Aorta (tissue), 5 donors: ENCODE measurements at regions of chr17 and their contacts with region 1.

Region 1: DNA sequence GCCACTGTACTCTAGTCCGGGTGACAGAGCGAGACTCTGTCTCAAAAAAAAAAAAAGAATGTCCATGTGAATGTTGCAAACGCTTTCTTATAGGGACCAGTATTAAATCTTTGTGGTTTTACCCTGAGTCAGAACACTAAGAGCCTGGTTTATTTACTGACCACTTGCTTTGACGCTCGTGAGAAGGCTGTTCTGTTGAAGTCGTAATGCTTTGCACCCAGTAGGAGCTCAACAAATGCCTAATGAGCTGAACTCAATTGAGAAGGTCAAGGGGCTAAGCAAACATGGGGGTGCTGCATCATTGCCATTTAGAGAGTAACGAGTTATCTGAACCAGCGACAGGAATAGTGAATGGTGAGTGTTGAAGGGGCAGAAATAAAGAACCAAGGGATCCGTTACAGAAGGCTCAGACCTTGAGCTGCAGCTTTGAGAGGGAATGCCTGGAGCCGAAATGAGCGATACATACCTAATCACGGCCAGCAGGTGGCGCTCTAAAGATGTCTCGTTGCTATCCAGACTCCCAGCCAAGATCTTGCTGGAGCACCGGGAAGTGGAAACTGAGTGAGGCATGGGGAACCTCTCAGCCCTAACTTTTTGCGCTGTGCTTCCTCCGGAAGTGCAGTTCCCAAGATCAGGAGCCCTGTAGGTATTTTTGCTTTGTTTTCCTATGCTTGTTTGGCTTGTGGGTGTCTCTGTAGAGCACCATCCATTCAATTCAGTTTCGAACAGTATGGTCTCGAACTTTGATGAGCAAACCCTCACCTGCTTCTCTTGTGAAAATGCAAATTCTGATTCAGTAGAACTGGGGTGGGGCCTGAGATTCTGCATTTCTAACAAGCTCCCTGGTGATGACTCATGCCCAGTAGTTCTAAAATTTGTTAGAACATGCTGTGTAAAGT is 12.6 kb upstream of the RNF222 start:
- DNase-seq: peak; percentile 93 to 97
- ATAC-seq: peak; percentile 94
- H3K4me3 ChIP-seq: no peak overlapping the region
- H3K27ac ChIP-seq: no peak overlapping the region
- H3K4me1 ChIP-seq: no peaks in the 10 kb centered on the region
- H3K27me3 ChIP-seq: no peaks in the 10 kb centered on the region

Region 2: DNA sequence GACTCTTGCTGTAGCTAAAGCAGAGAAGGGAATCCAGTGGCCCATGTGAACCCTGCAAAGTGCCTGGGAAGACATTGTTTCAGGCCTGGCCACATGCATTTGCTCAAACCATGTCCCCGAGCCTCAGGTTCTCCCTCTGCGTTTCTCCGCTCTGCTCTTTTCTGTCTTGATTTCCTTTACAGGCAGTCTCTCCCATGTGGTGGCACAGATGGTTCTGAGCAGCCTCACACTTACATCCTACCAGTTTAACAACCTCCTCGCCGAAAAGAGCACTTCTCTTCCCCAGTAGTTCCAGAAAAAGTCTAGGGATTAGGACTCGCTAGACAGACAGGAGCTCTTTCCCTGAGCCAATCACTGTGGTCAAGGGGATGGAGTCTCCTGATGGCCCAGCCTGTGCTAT is 248.6 kb after region 1 on chr17:
- intact Hi-C with region 1: no loop called
- DNase-seq: no peak
- ATAC-seq: no peak
- H3K4me3 ChIP-seq: no peak overlapping the region
- H3K27ac ChIP-seq: no peak overlapping the region
- H3K4me1 ChIP-seq: peaks cover 1 to 7% of the 10 kb centered on the region in 2 donors
- H3K27me3 ChIP-seq: no peaks in the 10 kb centered on the region

Region 3: DNA sequence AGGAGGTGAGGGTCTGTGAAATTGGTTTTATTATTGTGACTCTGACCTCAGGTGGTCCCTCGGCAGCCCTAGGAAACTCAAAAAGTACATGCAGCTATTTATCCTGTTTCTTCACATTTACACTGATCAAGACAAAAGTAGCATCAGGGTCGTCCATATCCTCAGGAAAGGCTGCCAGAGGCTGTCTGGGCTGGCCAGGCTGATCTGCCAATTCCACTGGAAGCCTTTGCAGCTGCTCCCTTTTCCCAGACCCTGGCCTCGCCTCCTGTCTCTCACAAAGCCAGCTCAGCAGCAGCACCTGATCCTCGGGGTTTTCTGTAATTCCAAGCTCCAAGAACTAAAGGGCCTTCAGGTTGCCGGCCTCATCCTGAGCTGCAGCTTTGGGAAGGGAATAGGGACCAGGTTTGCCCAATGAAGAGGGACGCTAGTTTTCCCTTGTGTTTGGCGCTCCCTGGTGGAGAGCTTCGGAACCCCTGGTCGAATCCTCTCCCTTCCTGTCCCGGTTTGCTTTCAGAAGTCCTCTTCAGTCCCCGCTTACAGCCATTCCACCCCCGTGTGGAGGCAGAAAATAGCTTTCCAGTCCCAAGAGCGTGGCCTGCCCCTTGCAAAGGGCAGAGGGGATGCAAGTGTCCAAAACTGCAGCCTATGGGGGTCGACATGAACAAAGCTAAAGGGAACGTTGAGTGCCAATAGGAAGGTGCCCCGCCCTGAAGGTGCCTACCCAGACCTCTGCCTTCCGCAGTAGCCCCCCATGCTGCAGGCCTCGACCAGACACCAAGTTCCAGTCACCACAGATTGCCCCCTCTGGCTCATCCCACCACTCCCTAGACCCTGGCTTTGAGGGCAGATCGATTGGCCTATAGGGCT is 375.6 kb after region 1 on chr17:
- intact Hi-C with region 1: loop called (anchors 2 to 5 kb)
- DNase-seq: peak; percentile 90 to 96
- ATAC-seq: peak; percentile 91
- H3K4me3 ChIP-seq: no peak overlapping the region
- H3K27ac ChIP-seq: peak overlapping the region in 1 of 2 donors; percentile 61
- H3K4me1 ChIP-seq: no peaks in the 10 kb centered on the region
- H3K27me3 ChIP-seq: no peaks in the 10 kb centered on the region

Region 4: GRCh38 chr17:8894673-8895578 is 484.7 kb after region 1 on chr17:
- intact Hi-C with region 1: loop called (anchors 5 to 10 kb)
- DNase-seq: peak in 1 of 2 donors; percentile 70
- ATAC-seq: peak; percentile 85
- H3K4me3 ChIP-seq: no peak overlapping the region
- H3K27ac ChIP-seq: no peak overlapping the region
- H3K4me1 ChIP-seq: no peaks in the 10 kb centered on the region
- H3K27me3 ChIP-seq: no peaks in the 10 kb centered on the region